ENCODE measurements at regions of chr17 and their contacts with region 1.

Region 1: DNA sequence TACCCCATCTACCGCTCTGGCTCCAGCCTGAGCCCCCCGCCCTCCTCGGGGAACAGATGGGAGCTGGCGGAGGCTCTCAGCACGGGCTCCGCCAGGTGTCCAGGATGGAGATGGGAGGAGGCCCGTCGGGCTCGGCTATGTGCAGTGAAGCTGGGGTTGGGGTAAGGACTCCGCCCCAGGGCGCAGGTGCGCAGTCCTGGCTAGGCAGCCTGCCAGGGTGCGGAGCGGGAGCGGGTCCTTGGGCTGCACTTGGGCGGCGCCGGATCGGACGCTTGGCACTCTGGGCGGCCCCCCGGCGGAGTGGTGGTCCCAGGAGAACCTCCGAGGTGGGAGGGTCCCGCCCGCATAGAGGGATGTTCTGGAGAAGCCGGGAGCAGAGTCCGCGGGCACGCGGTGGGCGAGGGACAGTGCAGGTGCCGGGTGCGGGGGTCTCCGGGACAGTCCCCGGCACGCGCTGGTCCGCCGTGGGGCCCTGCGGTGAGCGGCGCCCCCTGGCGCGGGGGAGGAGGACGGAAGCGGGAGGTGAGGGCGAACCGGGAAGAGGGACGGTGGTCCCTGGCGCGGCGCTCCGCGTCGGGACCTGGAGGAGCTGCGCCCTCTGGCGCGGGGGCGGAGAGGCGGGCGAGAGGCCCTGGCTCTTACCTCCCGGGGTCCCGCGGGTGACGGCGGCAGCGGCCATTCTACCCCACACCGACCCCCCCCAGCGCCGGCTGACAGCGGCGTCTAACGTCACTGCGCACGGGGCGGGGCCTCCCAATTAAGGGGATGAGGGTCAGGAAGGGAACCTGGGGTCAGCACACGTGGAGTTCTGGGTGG is at the start of gene CAMTA2:
- DNase-seq: peak; percentile 88 to 98
- H3K4me3 ChIP-seq: peak within 1 kb of the TSS; percentile 77
- CTCF ChIP-seq: no peak
- POLR2A ChIP-seq: peak in 1 of 2 donors; percentile 12
- total RNA-seq, gene CAMTA2: 21.7 to 35.3 (median 30.6) TPM

Region 2: DNA sequence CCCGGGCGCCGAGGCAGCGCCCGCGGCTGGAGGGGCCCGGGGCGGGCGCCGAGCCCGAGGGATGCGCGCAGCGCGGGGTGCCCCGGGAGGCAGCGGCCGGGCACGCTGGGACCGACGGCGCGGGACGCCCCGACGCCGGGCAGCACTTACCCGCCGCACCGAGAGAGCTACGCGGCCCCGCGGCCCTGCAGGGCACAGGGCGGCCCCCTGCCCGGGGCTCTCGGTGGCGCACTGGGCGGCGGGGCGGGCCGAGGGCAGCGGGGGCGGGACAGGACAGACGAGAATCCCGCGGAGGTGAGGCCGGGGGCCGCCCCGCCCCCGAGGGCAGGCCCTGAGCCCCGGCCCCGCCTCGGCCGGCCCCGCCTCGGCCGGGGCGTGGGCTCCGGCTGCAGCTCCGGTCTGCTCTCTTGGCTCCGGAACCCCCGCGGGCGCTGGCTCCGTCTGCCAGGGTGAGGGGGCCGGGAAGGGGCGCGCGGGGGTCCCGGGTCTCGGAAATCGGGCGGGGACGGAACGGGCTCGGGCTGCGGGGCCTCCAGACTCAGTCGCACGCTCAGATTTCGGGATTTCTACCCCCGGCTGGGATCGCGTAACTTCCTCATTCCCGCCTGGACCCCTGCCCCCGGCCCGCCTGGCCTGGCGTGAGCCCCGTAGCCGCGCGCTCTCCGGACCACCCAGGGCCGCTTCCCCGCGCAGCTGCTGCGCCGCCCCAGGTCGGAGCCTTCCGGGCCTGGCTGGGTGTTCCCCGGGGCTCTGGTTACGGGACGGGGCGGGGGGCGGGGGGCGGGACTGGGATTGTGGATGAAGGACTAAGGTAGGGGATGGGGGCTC is 180.2 kb before region 1 on chr17 and contains the start of gene PLD2:
- intact Hi-C with region 1: no loop called
- DNase-seq: peak; percentile 76 to 96
- H3K4me3 ChIP-seq: peak within 1 kb of the TSS; percentile 55
- CTCF ChIP-seq: no peak
- POLR2A ChIP-seq: no peak
- total RNA-seq, gene PLD2: 40.1 to 78.8 (median 56.3) TPM

Region 3: GRCh38 chr17:4997302-4998026 is 10.3 kb after region 1 on chr17 and contains the starts of genes INCA1 and KIF1C:
- intact Hi-C with region 1: no loop called
- DNase-seq: peak; percentile 87 to 98
- H3K4me3 ChIP-seq: peak within 1 kb of the TSS; percentile 87
- CTCF ChIP-seq: no peak
- POLR2A ChIP-seq: no peak
- total RNA-seq, gene INCA1: 0.39 to 2.6 (median 1.4) TPM
- total RNA-seq, gene KIF1C: 87.6 to 140 (median 100) TPM

Region 4: DNA sequence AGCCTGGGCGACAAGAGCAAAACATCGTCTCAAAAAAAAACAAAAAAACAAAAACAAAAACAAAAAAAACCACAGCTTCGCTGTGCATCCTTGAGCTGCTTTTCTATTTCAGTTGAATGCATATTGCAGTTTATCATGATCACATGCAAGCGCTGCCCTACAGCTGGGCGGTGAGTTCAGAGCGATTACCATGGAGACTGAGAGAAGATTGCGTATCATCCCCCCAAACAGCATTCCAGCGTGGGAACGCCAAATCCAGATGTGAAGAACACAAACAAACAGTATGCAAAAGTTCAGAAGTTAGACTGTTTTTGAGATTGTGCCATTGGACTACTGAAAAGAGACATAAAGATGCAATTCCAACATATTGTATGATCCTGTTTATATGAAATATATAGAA is 63.1 kb after region 1 on chr17:
- intact Hi-C with region 1: loop called (anchors 10 kb)
- DNase-seq: no peak
- H3K4me3 ChIP-seq: no peak overlapping the region
- CTCF ChIP-seq: no peak
- POLR2A ChIP-seq: no peak